Left ventricle myocardium superior (tissue), 1 donor: ENCODE measurements at regions of chr6 and their contacts with region 1.

Region 1: DNA sequence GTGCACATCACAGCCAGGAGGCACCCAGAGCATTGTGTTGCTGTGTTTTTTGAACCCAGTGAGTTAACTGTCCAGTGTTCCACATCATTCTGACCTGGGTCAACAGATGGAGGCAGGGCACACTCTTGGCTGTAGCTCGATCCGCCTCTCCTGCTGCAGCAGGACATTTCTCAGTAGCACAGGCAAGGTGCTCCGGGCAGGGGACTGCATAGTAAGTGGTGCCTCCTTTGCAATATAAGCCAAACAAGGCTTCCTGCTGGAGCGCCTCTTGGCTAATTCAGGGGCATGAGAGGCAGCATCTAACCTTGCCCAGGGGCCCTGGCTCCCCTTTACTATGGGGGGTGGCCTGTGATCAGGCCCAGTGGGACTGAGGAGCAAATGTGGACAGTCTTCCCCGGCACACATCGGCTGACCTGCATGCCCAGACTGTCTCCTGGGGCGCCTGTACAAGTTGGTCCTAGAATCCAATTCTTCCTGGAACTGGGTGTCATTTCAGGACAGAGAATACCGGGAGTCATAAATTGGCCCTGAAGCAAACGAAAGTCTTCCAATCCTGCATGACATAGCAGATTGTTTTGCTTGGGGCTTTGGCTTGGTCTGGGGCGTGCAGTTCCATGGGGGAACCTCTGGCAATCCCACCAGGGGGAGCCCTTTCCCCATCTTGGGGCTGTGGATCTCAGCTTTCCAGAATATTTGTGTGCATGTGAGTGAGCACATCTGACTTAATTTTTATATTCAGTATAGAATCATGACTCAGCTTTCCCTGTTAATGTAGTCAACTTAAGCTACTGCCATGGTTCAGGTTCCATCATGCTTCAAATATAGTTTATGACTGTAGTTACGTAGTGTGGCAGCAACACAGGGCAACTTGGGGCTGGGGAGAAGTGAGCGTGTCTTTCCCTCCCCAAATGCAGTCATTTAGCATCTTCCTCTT is 56.0 kb upstream of the DDR1 start:
- DNase-seq: peak; percentile 89
- ATAC-seq: peak; percentile 94

Region 2: DNA sequence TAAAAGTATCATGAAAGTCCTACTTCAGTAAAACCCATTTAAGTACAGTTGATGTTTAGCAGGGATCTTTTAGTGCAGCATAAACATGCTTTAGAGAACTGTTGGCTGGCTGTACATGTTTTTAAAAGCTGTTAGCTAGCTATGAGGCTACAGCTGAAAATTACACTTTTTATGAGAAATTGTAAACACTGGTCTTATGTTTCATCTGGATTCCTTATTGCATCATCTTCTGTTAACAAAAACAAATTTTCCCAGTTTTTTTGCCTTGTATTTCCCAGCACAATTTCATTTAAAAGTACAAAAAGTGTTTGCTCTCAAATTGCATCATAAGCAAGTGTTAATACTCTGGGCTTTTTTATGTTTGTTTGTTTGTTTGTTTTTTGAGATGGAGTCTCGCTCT is 357.3 kb before region 1 on chr6:
- intact Hi-C with region 1: no loop called
- DNase-seq: no peak
- ATAC-seq: no peak

Region 3: GRCh38 chr6:30489081-30490025 is 338.9 kb before region 1 on chr6 and contains the start of gene HLA-E:
- intact Hi-C with region 1: loop called (anchors 10 kb)
- DNase-seq: peak; percentile 86
- ATAC-seq: peak; percentile 97
- total RNA-seq, gene HLA-E: 155 TPM

Region 4: GRCh38 chr6:30742316-30743098 is 85.8 kb before region 1 on chr6 and contains the start of gene FLOT1:
- intact Hi-C with region 1: loop called (anchors 10 kb)
- DNase-seq: peak; percentile 99
- ATAC-seq: peak; percentile 91
- total RNA-seq, gene FLOT1: 238 TPM

Region 5: DNA sequence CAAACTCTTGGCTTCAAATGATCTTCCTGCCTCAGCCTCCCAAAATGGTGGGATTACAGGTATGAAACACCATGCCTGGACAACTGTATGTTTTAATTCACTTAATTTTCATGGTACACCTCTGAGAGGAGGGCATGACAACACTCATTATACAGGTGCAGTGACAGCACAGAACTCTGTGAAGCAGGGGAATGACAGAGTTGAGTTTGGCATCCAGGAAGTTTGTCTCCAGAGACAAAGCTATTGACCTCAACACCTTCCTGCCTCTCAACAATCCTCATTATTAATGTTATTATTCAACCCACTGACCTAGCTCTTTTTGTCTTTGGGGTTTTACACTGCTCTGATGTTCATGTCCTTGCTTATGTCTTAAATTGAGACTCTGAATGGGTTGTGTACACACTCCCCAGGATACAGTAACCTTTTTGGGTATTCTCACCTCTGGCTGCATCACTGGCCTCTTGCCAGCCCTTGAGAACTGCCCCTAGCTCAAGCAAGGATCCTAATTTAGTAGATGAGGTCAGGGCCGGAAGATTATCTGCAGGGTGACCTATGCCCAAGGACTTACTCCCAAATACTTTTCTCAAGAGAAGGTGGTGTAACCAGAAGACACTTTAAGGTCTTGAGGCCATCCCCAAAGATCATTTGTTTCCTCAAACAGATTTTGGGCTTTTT is 70.9 kb before region 1 on chr6:
- intact Hi-C with region 1: no loop called
- DNase-seq: peak; percentile 71
- ATAC-seq: peak; percentile 71

Region 6: DNA sequence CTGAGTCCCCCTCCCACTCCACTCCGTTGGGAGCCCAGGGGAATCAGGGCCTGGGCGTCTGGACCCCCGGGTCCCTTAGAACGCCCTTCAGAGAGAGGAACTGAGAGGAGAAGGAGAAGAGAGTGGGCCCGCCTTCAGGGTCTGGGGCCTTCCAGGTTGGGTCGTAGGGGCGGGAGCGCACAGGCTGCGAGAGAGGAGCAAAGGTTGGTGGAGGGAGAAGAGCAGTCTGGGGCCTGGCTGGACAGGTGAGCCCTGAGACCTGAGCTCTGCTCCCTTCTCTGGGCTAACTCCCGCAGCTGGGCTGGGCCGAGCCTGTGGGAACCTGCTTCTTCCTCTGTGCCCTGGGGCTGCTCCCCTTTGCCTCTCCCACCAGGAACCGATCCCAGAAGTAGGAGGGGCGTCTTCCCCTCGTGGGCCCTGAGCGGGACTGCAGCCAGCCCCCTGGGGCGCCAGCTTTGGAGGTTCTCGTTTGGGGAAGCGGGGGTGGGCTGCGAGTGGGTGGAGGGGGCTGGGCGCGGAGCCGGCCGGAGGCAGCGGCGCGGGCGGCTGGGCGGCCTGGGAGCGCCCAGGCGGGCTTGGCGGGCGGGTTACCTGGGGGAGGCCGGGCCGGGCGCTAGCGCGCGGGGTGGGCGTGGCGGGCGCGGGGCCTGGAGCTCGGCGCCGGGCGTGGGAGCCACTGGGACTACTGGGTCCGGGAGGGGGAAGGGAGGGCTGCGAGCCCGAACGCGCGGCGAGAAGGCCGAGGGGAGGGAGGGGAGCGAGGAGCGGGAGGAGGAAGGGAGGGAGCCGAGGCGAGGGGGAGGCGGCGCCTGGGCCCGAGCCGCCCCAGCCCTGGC is 55.6 kb after region 1 on chr6 and contains the start of gene DDR1:
- intact Hi-C with region 1: no loop called
- DNase-seq: peak; percentile 85
- ATAC-seq: peak; percentile 81
- total RNA-seq, gene DDR1: 25.7 TPM